ENCODE measurements at regions of chr1 and their contacts with region 1.

Region 1: DNA sequence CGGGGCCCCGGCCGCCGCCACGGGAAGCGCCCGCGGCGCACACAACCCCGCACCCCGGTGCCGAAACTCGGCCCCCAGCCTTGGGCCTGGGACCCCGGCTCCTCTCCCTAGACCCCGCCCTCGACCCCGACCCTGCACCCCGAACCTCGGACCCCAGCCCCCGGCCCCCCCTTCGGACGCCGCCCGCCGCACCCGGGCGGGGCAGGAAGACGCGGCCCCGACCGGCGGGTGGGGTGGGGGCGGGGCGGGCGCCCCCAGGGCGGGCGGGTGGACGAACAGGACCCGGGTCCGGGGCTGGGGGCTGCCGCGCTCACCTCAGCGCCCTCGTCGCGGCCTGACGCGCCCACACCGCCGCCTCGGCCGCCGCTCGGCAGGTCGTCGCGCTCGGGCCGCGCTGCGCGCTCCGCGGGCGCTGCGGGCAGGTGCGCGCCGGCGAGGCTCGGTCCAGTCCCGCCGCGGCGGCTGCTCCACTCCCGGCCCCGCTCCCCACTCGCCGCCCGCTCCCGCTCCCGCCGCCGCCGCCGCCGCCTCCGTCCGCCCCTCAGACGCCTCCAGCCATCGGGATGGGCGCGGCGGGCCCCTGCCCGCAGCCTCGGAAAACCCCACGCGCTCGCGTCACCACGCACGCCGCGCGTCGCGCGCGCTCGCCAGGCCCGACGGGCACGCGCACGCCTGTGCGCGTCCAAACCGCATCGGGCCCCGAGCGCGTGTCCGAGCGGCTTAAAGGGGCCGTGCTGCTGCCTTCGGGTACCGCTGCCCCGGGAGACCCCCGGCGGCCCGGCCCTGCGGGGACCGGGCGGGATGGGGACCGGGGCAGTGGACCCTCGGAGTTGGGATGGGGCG is at the start of gene GNB1:
- DNase-seq: peak; percentile 85 to 86
- H3K4me3 ChIP-seq: peak within 1 kb of the TSS; percentile 75 to 86 (median 79)
- H3K27ac ChIP-seq: peak within 1 kb of the TSS; percentile 88 to 94 (median 90)
- H3K4me1 ChIP-seq: peaks cover 49 to 65% of the 10 kb centered on the region in 2 donors
- H3K27me3 ChIP-seq: no peaks in the 10 kb centered on the region
- CTCF ChIP-seq: no peak
- POLR2A ChIP-seq: peak; percentile 23 to 88
- total RNA-seq, gene GNB1: 154 to 200 (median 174) TPM

Region 2: GRCh38 chr1:1777950-1778662 is 112.6 kb before region 1 on chr1 and contains the start of gene NADK:
- intact Hi-C with region 1: loop called (anchors 5 kb)
- DNase-seq: peak; percentile 68 to 69
- H3K4me3 ChIP-seq: peak within 1 kb of the TSS; percentile 71 to 85 (median 85)
- H3K27ac ChIP-seq: peak within 1 kb of the TSS; percentile 55 to 94 (median 85)
- H3K4me1 ChIP-seq: peaks cover 47 to 72% of the 10 kb centered on the region in 2 donors
- H3K27me3 ChIP-seq: no peaks in the 10 kb centered on the region
- CTCF ChIP-seq: peak in 1 of 6 experiments; percentile 13
- POLR2A ChIP-seq: peak in 1 of 2 donors; percentile 73
- total RNA-seq, gene NADK: 64.8 to 91.4 (median 84.2) TPM

Region 3: GRCh38 chr1:1833916-1834325 is 56.8 kb before region 1 on chr1:
- intact Hi-C with region 1: loop called (anchors 10 kb)
- DNase-seq: peak; percentile 59 to 72
- H3K4me3 ChIP-seq: no peak overlapping the region
- H3K27ac ChIP-seq: no peak overlapping the region
- H3K4me1 ChIP-seq: peaks cover 8 to 28% of the 10 kb centered on the region in 2 donors
- H3K27me3 ChIP-seq: no peaks in the 10 kb centered on the region
- CTCF ChIP-seq: no peak
- POLR2A ChIP-seq: no peak

Measured in thyroid gland (tissue), 4 donors.